ENCODE measurements at regions of chr2 and their contacts with region 1.

Region 1: DNA sequence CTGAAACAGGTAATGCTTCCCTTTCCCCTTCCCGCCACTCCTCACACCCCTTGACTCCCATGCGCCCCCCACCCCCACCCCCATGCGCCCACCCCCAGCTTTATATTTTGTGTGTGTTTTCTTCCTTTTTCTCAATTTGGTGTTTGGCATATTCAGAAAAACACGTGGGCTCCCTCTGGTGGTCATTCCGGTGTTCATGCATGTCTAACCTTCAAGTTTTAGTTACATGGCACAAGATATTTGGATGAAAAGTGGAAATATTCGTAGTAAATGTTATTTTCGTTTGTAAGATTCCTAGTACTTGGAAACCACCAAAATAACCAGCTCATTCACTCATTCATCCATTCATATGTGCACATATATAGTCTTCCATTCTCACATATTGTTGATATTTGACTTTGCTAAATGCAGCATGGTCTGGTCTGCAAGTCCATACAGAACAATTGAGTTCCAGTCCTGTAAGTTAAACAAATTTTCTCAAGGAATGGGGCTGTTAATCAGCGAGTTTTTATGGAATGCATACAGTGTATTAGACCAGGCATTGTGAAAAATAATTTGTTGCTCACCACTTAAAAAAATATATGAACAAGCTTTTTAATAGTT is 143.6 kb upstream of the MAP3K20 start:
- DNase-seq: peak; percentile 58 to 65
- H3K4me3 ChIP-seq: no peak overlapping the region
- H3K27ac ChIP-seq: no peak overlapping the region; the same call in 1 of the 2 replicates
- H3K4me1 ChIP-seq: peaks cover 27% of the 10 kb centered on the region
- H3K27me3 ChIP-seq: no peaks in the 10 kb centered on the region
- CTCF ChIP-seq: peak; percentile 92

Region 2: DNA sequence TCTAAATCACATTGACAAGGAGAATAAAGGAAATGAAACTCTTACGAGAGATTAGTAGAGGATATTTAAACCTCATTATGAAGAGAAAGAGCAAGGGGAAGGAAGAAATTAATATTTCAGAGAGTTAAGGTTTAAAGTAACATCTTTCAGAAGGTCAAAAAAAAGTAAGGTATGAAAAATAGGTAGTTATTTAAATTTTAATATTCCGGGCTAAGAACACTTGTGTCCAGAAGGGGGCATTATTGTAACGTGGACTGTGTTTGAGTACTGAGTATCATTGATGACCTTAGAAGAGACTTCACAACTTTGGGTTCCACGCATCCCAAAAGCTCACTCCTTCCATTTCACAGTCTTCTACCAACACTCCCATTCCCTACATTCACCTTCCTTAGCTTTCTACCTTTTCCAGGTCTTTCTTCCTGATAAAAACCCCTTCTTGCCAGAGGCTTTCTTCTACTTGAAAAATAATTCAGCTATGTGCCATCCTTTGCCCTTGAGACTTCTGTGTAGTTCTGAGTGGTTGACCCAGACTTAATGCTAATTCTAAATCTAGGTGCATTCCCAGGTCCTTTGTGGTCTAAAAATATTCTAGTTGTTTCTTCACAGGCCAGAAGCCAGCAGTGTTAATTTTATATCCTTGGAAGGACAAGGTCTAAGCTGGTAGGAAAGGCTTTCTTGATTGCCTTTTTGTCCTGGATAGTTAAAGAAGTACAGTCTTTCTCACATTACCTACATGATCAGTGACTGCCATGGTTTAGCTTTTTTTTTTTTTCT is 1228.3 kb before region 1 on chr2:
- CTCF ChIA-PET with region 1: no interaction called
- POLR2A ChIA-PET with region 1: no interaction called
- intact Hi-C with region 1: loop called (anchors 10 kb)
- DNase-seq: peak; percentile 10 to 59
- H3K4me3 ChIP-seq: no peak overlapping the region
- H3K27ac ChIP-seq: peak overlapping the region; percentile 18; the same call in 1 of the 2 replicates
- H3K4me1 ChIP-seq: no peaks in the 10 kb centered on the region
- H3K27me3 ChIP-seq: no peaks in the 10 kb centered on the region
- CTCF ChIP-seq: peak; percentile 85

Region 3: GRCh38 chr2:172743143-172743542 is 188.9 kb before region 1 on chr2:
- CTCF ChIA-PET with region 1: interaction called, 10 read pairs
- POLR2A ChIA-PET with region 1: no interaction called
- intact Hi-C with region 1: no loop called
- DNase-seq: no peak
- H3K4me3 ChIP-seq: no peak overlapping the region
- H3K27ac ChIP-seq: no peak overlapping the region
- H3K4me1 ChIP-seq: no peaks in the 10 kb centered on the region
- H3K27me3 ChIP-seq: no peaks in the 10 kb centered on the region
- CTCF ChIP-seq: no peak

Region 4: GRCh38 chr2:172836386-172836821 is 95.6 kb before region 1 on chr2:
- CTCF ChIA-PET with region 1: no interaction called
- POLR2A ChIA-PET with region 1: no interaction called
- intact Hi-C with region 1: loop called (anchors 1 kb)
- DNase-seq: peak; percentile 82 to 100
- H3K4me3 ChIP-seq: no peak overlapping the region
- H3K27ac ChIP-seq: peak overlapping the region; percentile 77
- H3K4me1 ChIP-seq: peaks cover 44% of the 10 kb centered on the region
- H3K27me3 ChIP-seq: no peaks in the 10 kb centered on the region
- CTCF ChIP-seq: no peak

Region 5: GRCh38 chr2:172893111-172893510 is 38.9 kb before region 1 on chr2:
- CTCF ChIA-PET with region 1: no interaction called
- POLR2A ChIA-PET with region 1: no interaction called
- intact Hi-C with region 1: no loop called
- DNase-seq: no peak
- H3K4me3 ChIP-seq: no peak overlapping the region
- H3K27ac ChIP-seq: no peak overlapping the region
- H3K4me1 ChIP-seq: 0 out of 2 replicates have a peak, but pooled peaks cover 5% of the 10 kb centered on the region
- H3K27me3 ChIP-seq: peaks cover 17% of the 10 kb centered on the region
- CTCF ChIP-seq: no peak

Region 6: DNA sequence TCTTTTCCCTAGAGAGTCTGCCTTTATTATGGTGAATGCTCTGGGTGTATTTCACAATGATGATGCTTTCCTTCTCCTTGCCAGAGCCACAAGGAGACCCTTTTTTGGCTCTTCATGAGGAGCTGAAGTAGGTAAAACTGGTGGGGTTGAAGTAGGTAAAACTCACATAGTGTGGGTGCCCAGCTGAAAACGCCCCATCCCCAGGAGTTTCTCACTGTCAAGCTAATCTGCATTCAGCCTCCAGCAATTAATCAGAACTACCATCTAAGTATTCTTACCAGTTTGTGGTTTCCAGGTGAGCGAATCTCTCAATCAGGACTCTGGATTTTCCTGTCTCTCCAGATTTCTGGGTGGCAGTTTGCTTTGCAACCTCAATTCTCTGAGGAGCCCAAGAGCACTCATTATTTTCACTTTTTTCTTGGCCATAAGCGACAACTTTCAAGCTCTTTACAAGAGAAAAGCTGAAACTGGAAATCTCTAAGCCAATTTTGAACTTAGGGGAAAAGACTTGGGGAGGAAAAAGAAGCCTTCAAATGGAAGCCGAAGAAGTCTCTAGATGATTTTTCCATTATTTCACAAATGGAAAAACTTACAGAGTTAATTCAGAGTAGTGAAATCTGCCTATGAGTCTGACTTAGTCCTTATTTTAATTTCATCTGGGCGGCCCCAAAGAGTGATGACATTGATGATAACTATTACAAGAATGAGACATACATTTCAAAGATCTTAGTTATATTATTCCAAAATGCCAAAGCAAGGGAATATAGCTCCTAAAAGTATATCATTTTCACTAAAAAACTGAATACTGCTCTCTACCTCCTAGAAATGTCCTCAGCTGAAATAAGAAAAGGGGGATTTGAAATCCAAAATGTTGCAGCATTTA is 22.2 kb after region 1 on chr2:
- CTCF ChIA-PET with region 1: interaction called, 9 read pairs
- POLR2A ChIA-PET with region 1: interaction called, 8 read pairs
- intact Hi-C with region 1: loop called (anchors 2 kb)
- DNase-seq: peak; percentile 80 to 99
- H3K4me3 ChIP-seq: peak overlapping the region; percentile 36; the same call in 1 of the 2 replicates
- H3K27ac ChIP-seq: peak overlapping the region; percentile 85
- H3K4me1 ChIP-seq: peaks cover 44% of the 10 kb centered on the region
- H3K27me3 ChIP-seq: no peaks in the 10 kb centered on the region
- CTCF ChIP-seq: no peak

Region 7: GRCh38 chr2:173021939-173022371 is 89.9 kb after region 1 on chr2:
- CTCF ChIA-PET with region 1: interaction called, 7 read pairs
- POLR2A ChIA-PET with region 1: no interaction called
- intact Hi-C with region 1: loop called (anchors 1 kb)
- DNase-seq: peak; percentile 49 to 81
- H3K4me3 ChIP-seq: no peak overlapping the region
- H3K27ac ChIP-seq: no peak overlapping the region
- H3K4me1 ChIP-seq: peaks cover 4% of the 10 kb centered on the region
- H3K27me3 ChIP-seq: no peaks in the 10 kb centered on the region
- CTCF ChIP-seq: peak; percentile 93

Measured in PC-9 (cell line).